IMR-90 (cell line): ENCODE measurements at regions of chr2 and their contacts with region 1.

Region 1: GRCh38 chr2:216692636-216693413 is 2.5 kb downstream of the IGFBP5 start:
- DNase-seq: peak; percentile 81
- ATAC-seq: peak; percentile 14
- H3K4me3 ChIP-seq: peak overlapping the region; percentile 69
- H3K27ac ChIP-seq: peak overlapping the region; percentile 85
- H3K4me1 ChIP-seq: peaks cover 16% of the 10 kb centered on the region
- H3K27me3 ChIP-seq: no peaks in the 10 kb centered on the region
- CTCF ChIP-seq: no peak
- POLR2A ChIP-seq: peak; percentile 12; the same call in 1 of the 2 replicates
- RAD21 ChIP-seq: no peak

Region 2: DNA sequence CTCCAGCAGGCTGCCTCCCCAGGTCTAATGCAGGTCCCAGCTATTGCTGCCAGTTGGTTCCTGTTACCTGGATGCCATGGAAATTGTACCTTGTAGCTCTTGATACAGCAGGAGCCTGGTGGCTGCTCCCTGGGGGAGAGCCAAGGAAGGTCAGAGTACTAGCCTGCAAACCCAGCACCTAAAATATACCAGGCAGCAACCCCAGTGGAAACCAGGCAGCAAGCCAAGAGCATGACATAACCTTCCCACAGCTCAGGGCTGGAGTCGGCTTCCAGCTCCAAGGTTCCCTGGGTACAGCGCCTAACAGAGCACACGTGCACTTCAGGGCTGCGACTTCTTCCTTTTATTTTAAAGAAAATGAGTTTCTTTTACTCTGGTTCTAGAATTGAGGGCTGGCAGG is 136.7 kb after region 1 on chr2:
- CTCF ChIA-PET with region 1: interaction called, 3 read pairs
- POLR2A ChIA-PET with region 1: interaction called, 19 read pairs
- dilution Hi-C with region 1: no loop called
- in situ Hi-C with region 1: no loop called
- intact Hi-C with region 1: no loop called
- DNase-seq: peak; percentile 63
- ATAC-seq: peak; percentile 80
- H3K4me3 ChIP-seq: no peak overlapping the region
- H3K27ac ChIP-seq: no peak overlapping the region
- H3K4me1 ChIP-seq: peaks cover 5% of the 10 kb centered on the region; the same call in 1 of the 2 replicates
- H3K27me3 ChIP-seq: peaks cover 13% of the 10 kb centered on the region
- CTCF ChIP-seq: no peak
- POLR2A ChIP-seq: no peak
- RAD21 ChIP-seq: no peak

Region 3: GRCh38 chr2:217166241-217166850 is 473.5 kb after region 1 on chr2:
- CTCF ChIA-PET with region 1: interaction called, 12 read pairs
- POLR2A ChIA-PET with region 1: interaction called, 13 read pairs
- dilution Hi-C with region 1: loop called (anchors 25 kb)
- in situ Hi-C with region 1: loop called (anchors 10 kb)
- intact Hi-C with region 1: loop called (anchors 1 kb)
- DNase-seq: peak; percentile 73
- ATAC-seq: peak; percentile 49
- H3K4me3 ChIP-seq: no peak overlapping the region
- H3K27ac ChIP-seq: peak overlapping the region; percentile 65
- H3K4me1 ChIP-seq: peaks cover 19% of the 10 kb centered on the region
- H3K27me3 ChIP-seq: no peaks in the 10 kb centered on the region
- CTCF ChIP-seq: peak; percentile 66
- POLR2A ChIP-seq: no peak
- RAD21 ChIP-seq: peak; percentile 85

Region 4: GRCh38 chr2:217277646-217278398 is 585.0 kb after region 1 on chr2:
- CTCF ChIA-PET with region 1: no interaction called
- POLR2A ChIA-PET with region 1: interaction called, 15 read pairs
- dilution Hi-C with region 1: no loop called
- in situ Hi-C with region 1: loop called (anchors 10 kb)
- intact Hi-C with region 1: loop called (anchors 2 kb)
- DNase-seq: peak; percentile 100
- ATAC-seq: peak; percentile 77
- H3K4me3 ChIP-seq: peak overlapping the region; percentile 22; the same call in 1 of the 2 replicates
- H3K27ac ChIP-seq: peak overlapping the region; percentile 91
- H3K4me1 ChIP-seq: peaks cover 13% of the 10 kb centered on the region
- H3K27me3 ChIP-seq: no peaks in the 10 kb centered on the region
- CTCF ChIP-seq: no peak
- POLR2A ChIP-seq: peak; percentile 50; the same call in 1 of the 2 replicates
- RAD21 ChIP-seq: peak; percentile 20; the same call in 1 of the 2 replicates

Region 5: DNA sequence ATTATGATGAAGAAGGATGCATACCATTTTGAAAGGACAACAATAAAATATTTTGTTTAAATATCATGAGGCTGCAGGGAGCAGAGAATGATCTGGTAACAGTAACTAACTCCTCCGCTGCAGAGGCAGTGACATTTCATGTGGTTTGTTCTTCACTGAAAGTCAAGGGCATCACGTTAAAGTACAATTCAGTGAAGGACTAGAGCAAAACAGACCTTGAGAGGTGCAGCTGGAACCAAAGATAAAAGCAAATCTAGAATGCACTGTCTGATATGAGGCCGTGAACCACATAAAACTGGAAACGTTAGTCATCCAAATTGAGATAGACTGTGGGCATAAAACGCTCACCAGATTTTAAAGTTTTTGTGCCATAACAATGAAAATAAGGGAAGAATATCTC is 690.0 kb after region 1 on chr2:
- CTCF ChIA-PET with region 1: no interaction called
- POLR2A ChIA-PET with region 1: no interaction called
- dilution Hi-C with region 1: no loop called
- in situ Hi-C with region 1: no loop called
- intact Hi-C with region 1: loop called (anchors 1 kb)
- DNase-seq: no peak
- ATAC-seq: no peak
- H3K4me3 ChIP-seq: no peak overlapping the region
- H3K27ac ChIP-seq: peak overlapping the region; percentile 79
- H3K4me1 ChIP-seq: peaks cover 20% of the 10 kb centered on the region
- H3K27me3 ChIP-seq: no peaks in the 10 kb centered on the region
- CTCF ChIP-seq: no peak
- POLR2A ChIP-seq: no peak
- RAD21 ChIP-seq: no peak